Activated CD8-positive, alpha-beta T cell treated with anti-CD3 and anti-CD28 coated beads for 36 hours (primary cell): ENCODE measurements at regions of chr14 and their contacts with region 1.

Region 1: GRCh38 chr14:91396959-91397815 is 20.4 kb downstream of the CCDC88C start:
- DNase-seq: peak; percentile 80
- ATAC-seq: peak; percentile 73
- H3K4me3 Mint-ChIP-seq: peak overlapping the region; percentile 70
- H3K27ac Mint-ChIP-seq: peak overlapping the region; percentile 95
- H3K4me1 Mint-ChIP-seq: peaks cover 89% of the 10 kb centered on the region
- H3K27me3 Mint-ChIP-seq: no peaks in the 10 kb centered on the region
- CTCF ChIP-seq: no peak

Region 2: DNA sequence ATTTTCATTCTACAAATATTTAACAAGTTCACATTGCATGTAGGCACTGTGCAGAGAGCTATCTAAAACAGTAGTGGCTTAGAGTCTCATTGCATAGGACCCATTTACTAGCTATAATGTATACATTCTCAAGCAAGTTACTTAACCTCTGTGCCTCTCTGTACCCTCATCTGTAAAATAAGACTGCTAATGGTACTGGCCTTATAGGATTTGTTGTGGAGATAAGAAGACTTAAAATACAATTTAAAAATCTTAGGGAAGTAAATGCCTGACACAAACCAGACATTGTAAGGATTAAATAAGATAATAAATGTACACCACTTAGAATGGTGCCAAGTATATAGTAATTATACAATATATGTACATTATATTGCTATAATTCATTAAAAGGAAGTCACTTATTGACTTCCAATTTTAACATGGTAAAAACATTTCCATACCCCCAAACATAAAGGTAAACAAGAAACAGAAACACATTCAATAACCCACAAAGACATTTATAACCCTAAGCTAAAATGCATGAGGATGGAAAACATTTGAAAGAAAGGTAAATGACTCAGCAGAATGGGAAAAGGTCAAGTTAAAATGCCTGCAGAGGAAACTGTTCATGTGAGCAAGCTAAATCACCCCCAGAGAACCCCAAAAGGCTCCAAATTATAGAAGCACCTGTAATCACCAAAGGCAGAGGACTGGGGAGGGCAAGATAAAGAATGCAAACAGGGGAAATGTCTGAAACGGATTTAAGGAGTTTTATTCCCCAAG is 367.6 kb before region 1 on chr14:
- CTCF ChIA-PET with region 1: no interaction called
- POLR2A ChIA-PET with region 1: no interaction called
- intact Hi-C with region 1: no loop called
- DNase-seq: no peak
- ATAC-seq: peak; percentile 74
- H3K4me3 Mint-ChIP-seq: no peak overlapping the region
- H3K27ac Mint-ChIP-seq: peak overlapping the region; percentile 7
- H3K4me1 Mint-ChIP-seq: peaks cover 51% of the 10 kb centered on the region
- H3K27me3 Mint-ChIP-seq: no peaks in the 10 kb centered on the region
- CTCF ChIP-seq: no peak

Region 3: GRCh38 chr14:91119556-91120311 is 277.5 kb before region 1 on chr14:
- CTCF ChIA-PET with region 1: no interaction called
- POLR2A ChIA-PET with region 1: no interaction called
- intact Hi-C with region 1: no loop called
- DNase-seq: no peak
- ATAC-seq: no peak
- H3K4me3 Mint-ChIP-seq: no peak overlapping the region
- H3K27ac Mint-ChIP-seq: peak overlapping the region; percentile 13
- H3K4me1 Mint-ChIP-seq: peaks cover 62% of the 10 kb centered on the region
- H3K27me3 Mint-ChIP-seq: no peaks in the 10 kb centered on the region
- CTCF ChIP-seq: no peak

Region 4: DNA sequence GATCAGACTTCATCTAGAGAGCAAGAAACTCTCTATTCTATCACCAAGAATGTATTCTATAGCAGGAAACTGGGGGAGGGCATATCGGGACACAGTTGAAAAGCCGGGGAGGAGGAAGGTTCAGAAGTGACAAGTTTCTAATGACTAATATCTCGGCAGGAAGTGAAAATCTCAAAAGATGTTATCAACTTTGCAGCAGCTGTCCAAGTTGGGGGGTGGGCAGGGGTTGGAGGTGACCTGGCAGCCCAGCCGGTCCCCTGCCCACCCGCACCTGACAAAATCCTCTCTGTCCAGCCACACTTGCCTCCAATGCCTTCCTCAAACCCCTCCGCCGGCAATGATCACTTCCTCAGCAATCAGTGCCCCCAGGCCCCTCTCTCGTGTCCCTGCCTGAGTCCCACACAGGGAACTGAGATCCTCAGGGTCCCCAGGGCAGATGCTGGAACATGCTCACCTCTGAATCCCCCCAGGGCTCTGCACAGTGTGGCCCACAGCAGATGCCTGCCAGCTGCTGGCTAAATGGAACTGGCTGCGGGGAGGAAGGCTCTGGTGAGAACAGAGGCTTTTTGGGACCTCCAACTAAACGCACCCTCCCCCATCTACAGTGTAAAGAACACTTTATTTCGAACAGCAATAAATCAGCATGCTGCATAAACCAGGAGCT is 23.5 kb before region 1 on chr14:
- CTCF ChIA-PET with region 1: interaction called, 46 read pairs
- POLR2A ChIA-PET with region 1: interaction called, 111 read pairs
- intact Hi-C with region 1: no loop called
- DNase-seq: peak; percentile 84
- ATAC-seq: peak; percentile 53
- H3K4me3 Mint-ChIP-seq: peak overlapping the region; percentile 49
- H3K27ac Mint-ChIP-seq: peak overlapping the region; percentile 90
- H3K4me1 Mint-ChIP-seq: peaks cover 98% of the 10 kb centered on the region
- H3K27me3 Mint-ChIP-seq: no peaks in the 10 kb centered on the region
- CTCF ChIP-seq: no peak

Region 5: DNA sequence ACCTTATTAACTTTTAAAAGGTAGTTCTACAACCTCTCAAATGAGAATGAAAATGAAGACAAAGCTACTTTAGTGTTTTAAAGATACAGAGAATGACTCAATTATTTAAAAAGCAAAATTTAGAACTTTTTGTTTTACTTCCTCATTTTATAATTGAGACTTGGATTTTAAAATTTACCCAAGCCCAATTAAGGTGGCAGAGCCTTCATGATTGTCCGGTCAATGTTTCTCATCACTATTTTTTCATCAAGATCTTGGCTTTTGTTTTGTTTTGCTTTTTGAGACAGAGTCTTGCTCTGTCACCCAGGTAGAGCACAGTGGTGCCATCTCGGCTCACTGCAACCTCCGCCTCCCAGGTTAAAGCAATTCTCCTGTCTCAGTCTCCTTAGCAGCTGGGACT is 80.2 kb after region 1 on chr14:
- CTCF ChIA-PET with region 1: no interaction called
- POLR2A ChIA-PET with region 1: no interaction called
- intact Hi-C with region 1: no loop called
- DNase-seq: no peak
- ATAC-seq: no peak
- H3K4me3 Mint-ChIP-seq: no peak overlapping the region
- H3K27ac Mint-ChIP-seq: peak overlapping the region; percentile 64
- H3K4me1 Mint-ChIP-seq: peaks cover 38% of the 10 kb centered on the region
- H3K27me3 Mint-ChIP-seq: no peaks in the 10 kb centered on the region
- CTCF ChIP-seq: no peak

Region 6: DNA sequence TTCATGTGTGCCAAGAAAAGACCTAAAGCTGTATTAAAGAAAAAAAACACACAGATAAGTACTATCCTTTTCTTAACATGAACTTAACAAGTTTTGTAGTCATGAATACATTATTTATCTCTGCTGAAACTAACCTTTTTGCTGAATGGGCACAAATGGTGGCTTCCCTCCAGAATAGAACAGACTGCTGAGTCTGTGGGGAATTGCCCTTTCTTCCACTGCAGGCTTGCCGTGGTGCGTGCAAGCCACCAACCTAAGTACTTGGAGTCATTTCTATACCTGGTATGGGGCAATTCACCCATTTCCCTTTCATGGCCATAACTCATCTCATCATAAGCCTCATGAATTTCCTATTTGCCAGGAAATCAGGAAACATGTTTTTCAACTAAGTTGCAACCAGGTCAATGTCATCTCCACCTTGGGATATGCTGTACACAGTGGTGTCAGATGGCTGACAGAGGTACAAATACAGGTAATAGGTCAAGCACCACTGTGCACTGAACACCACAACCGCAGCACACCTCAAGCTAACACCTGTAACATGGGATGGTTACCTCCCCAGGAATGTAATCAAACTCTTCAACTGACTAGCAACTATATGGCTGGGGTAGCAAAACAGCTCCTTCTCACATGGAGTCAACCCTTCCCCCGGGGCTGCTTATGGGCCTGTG is 284.8 kb after region 1 on chr14:
- CTCF ChIA-PET with region 1: no interaction called
- POLR2A ChIA-PET with region 1: no interaction called
- intact Hi-C with region 1: no loop called
- DNase-seq: peak; percentile 28
- ATAC-seq: peak; percentile 88
- H3K4me3 Mint-ChIP-seq: no peak overlapping the region
- H3K27ac Mint-ChIP-seq: no peak overlapping the region
- H3K4me1 Mint-ChIP-seq: peaks cover 19% of the 10 kb centered on the region
- H3K27me3 Mint-ChIP-seq: no peaks in the 10 kb centered on the region
- CTCF ChIP-seq: no peak